ENCODE measurements at regions of chr14 and their contacts with region 1.

Region 1: GRCh38 chr14:33792720-33793368 is 158.0 kb downstream of the EGLN3 start:
- ATAC-seq: peak; percentile 84 to 96 (median 91)
- H3K4me3 ChIP-seq: peak overlapping the region in 4 of 5 donors; percentile 8 to 20 (median 14)
- H3K27ac ChIP-seq: no peak overlapping the region
- H3K4me1 ChIP-seq: peaks cover 35 to 50% of the 10 kb centered on the region in 2 donors

Region 2: DNA sequence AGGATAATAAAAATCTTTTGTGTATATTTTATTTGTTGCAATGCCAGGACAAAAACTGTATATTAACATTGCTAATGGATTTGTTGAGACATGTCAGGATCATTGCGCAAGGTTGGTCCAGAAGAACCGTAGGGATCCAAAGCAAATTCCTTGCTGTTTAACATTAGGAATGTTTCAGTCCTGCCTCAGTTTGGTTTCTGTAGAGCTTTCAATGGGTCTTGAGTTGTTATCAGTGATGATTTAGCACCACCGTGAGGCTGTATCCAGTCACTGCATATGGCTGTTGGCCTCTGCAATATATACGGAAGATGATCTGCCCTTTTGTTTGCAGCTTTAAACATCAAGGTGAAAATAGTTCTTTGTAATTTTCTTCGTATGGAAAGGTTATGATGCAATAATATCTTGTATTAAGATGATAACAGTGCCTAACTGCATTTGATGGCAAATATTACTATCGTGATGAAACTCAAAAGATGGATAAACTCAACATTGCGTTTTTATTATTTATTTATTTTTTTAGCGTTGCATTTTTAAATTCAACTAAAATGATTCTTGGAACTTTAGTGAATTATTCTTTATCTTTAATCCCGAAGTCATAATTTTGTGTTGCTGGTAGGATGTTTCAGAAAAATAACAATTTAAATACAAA is 1232.5 kb before region 1 on chr14:
- in situ Hi-C with region 1: loop called in 1 of 9 experiments (anchors 25 kb)
- ATAC-seq: peak; percentile 52 to 90 (median 82)
- H3K4me3 ChIP-seq: no peak overlapping the region
- H3K27ac ChIP-seq: no peak overlapping the region
- H3K4me1 ChIP-seq: no peaks in the 10 kb centered on the region

Region 3: DNA sequence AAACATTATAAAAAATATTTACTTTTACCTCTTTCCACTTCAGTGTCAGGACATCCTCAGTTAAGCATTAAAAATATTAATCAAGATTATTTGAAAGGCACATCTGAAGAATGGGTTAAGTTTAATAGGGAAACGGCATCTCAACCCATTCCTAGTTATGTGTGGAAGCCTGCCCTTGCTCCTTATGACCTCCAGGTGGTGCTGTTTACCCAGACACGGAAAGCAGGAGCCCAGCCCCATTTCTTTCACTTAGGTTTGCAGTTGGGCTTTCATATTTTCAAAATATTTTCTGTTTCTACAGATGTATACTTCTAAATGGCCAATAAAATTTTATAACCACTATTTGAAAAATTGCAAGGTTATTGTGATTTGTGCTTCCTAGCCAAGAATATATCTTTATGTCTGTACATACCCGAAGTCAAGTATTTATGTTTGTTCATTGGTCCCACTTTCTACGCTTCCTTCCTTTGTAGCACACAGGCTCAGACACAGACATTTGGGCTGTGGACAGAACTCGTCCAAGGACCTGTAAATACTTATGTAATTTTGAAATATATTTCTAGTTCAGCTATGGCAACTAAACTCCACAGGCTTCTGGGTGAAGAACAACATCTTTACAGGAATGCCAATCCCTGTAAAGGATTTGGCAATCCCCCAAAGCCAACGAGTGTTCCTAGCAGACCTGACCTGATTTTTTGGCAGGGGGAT is 1216.6 kb before region 1 on chr14:
- in situ Hi-C with region 1: loop called in 5 of 9 experiments (anchors 10 to 25 kb)
- ATAC-seq: peak; percentile 71 to 86 (median 82)
- H3K4me3 ChIP-seq: no peak overlapping the region
- H3K27ac ChIP-seq: no peak overlapping the region
- H3K4me1 ChIP-seq: peaks cover 25 to 30% of the 10 kb centered on the region in 2 donors

Region 4: GRCh38 chr14:32710731-32711680 is 1081.8 kb before region 1 on chr14:
- in situ Hi-C with region 1: loop called in 3 of 9 experiments (anchors 25 kb)
- ATAC-seq: peak; percentile 34 to 84 (median 64)
- H3K4me3 ChIP-seq: no peak overlapping the region
- H3K27ac ChIP-seq: no peak overlapping the region
- H3K4me1 ChIP-seq: peaks cover 12 to 22% of the 10 kb centered on the region in 2 donors

Region 5: GRCh38 chr14:32939254-32940065 is 853.4 kb before region 1 on chr14:
- in situ Hi-C with region 1: loop called in 3 of 9 experiments (anchors 25 kb)
- ATAC-seq: peak; percentile 69 to 82 (median 76)
- H3K4me3 ChIP-seq: peak overlapping the region; percentile 56 to 94 (median 77)
- H3K27ac ChIP-seq: peak overlapping the region; percentile 75 to 95
- H3K4me1 ChIP-seq: peaks cover 3 to 13% of the 10 kb centered on the region in 2 donors

Region 6: DNA sequence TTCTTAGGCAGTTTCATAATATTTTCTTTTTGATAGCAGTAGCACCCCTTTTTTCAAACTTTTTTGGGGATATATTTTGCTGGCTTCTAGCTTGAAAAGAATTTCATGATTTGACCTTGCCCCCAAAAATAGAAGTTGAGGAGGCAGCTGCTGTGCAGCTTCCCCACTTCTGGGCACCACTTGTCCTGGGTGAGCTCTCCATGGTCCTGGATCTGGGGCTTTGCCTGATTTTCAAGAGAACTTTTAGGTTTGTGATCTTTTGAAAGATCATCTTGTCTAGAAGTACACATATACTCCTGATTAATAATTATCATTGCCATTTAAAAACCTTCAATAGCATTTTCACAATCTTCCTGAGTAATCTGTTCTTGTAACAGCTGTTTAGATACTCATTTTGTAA is 582.5 kb before region 1 on chr14:
- in situ Hi-C with region 1: loop called in 1 of 9 experiments (anchors 25 kb)
- ATAC-seq: no peak
- H3K4me3 ChIP-seq: no peak overlapping the region
- H3K27ac ChIP-seq: no peak overlapping the region
- H3K4me1 ChIP-seq: peaks cover 28 to 32% of the 10 kb centered on the region in 2 donors

Region 7: DNA sequence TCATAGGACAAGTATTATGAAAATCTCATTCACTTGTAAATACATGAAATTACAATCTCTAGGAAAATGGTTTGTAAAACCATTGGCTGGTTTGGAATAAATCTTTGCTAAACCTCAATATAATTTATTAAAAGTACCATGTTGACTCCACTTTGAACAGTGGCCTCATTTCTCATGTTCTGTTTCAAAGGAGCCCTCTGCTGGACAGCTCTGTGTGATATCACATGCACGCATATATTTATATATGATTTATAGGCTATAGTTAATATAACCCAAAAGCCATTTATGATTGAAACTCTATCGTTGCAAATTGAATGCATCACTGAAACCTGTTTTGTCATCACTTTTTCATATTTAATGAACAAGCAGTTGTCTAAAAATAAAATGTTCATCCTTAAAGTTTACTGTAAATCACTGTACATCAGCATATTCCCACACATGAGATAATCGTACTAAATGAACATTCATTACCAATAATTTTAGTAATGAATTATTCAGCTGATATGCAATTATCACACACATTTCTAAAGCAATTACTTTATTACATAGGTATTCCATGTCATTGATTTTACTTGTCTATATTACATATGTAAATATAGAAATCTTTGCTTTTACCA is 360.3 kb before region 1 on chr14:
- in situ Hi-C with region 1: loop called in 1 of 9 experiments (anchors 25 kb)
- ATAC-seq: peak in 5 of 8 experiments; percentile 49 to 77 (median 60)
- H3K4me3 ChIP-seq: no peak overlapping the region
- H3K27ac ChIP-seq: no peak overlapping the region
- H3K4me1 ChIP-seq: peaks cover 14 to 24% of the 10 kb centered on the region in 2 donors

Region 8: GRCh38 chr14:34347683-34348082 is 554.8 kb after region 1 on chr14:
- in situ Hi-C with region 1: no loop called
- ATAC-seq: no peak
- H3K4me3 ChIP-seq: no peak overlapping the region
- H3K27ac ChIP-seq: no peak overlapping the region
- H3K4me1 ChIP-seq: no peaks in the 10 kb centered on the region